A673 (cell line): ENCODE measurements at regions of chr2 and their contacts with region 1.

Region 1: DNA sequence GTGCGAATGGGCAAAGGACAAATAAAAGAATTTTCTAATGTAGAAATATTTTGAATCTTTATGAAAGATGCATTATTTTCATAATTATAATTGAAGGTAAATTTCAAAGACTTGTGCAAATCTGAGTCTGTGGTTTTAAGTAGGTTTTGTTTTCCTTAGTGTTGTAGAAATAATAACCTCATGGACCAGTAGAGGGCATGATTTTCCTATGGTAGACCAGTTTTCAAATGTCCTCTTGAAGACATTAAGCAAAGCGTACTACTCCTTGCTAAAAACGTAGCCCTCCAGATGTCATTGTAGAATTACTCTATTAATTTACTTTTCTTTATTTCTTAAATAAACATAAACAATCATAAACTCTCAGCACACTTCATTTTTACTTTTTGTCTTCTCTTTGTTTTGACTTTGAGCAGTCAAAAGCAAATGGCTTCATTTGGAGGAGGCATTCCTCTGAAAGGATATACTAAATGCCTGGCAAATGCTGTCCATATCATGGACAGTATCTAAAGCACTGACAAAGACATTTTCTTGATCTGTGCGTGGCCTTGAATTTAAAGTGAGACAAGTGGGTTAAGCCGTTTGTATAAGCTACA is 85.8 kb upstream of the FAM237A start:
- DNase-seq: peak; percentile 51
- H3K4me3 ChIP-seq: no peak overlapping the region
- H3K27ac ChIP-seq: no peak overlapping the region
- H3K4me1 ChIP-seq: no peaks in the 10 kb centered on the region
- H3K27me3 ChIP-seq: peaks cover 21% of the 10 kb centered on the region
- CTCF ChIP-seq: peak; percentile 73

Region 2: DNA sequence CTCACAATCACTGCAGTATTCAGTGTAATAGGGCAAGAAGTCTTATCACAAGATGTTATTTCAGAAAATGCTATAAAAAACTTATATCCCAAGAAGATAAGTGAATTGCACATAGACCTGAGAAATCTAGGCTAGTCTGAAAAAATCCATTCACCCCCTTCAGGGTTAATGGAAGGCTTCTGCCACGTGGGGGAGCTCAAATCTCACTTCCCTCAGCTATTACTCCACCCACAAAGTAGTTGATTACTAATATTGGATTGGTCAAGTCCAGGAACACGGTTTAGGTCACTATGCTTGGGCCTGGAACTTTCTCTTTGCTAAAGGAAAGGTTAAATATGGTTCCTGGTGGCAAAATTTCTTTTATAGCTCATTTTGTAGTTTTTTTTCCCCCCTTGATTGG is 164.3 kb before region 1 on chr2:
- CTCF ChIA-PET with region 1: interaction called, 4 read pairs
- POLR2A ChIA-PET with region 1: no interaction called
- intact Hi-C with region 1: loop called (anchors 1 kb)
- DNase-seq: peak; percentile 54
- H3K4me3 ChIP-seq: no peak overlapping the region
- H3K27ac ChIP-seq: no peak overlapping the region
- H3K4me1 ChIP-seq: no peaks in the 10 kb centered on the region
- H3K27me3 ChIP-seq: no peaks in the 10 kb centered on the region
- CTCF ChIP-seq: peak; percentile 72

Region 3: DNA sequence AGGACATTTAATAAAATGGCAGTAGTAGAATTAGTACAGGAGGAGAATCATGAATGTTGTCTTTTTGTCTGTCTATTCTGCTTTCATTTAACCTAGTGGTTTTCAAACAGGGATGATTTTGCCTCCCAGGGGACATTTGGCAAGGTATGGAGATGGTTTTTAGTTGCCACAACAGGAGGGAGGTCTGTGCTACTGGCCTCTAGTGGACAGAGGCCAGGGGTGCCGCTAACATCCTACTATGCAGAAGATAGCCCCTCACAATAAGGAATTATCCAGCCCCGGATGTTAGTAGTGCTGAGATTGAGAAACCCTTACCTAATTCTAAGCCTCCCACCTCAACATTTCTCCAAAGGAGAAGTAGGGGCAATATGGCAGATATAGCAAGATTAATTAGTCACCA is 227.3 kb after region 1 on chr2:
- CTCF ChIA-PET with region 1: no interaction called
- POLR2A ChIA-PET with region 1: no interaction called
- intact Hi-C with region 1: loop called (anchors 1 kb)
- DNase-seq: peak; percentile 13
- H3K4me3 ChIP-seq: no peak overlapping the region
- H3K27ac ChIP-seq: no peak overlapping the region
- H3K4me1 ChIP-seq: no peaks in the 10 kb centered on the region
- H3K27me3 ChIP-seq: no peaks in the 10 kb centered on the region
- CTCF ChIP-seq: peak; percentile 45